Sciatic nerve (tissue), 2 donors: ENCODE measurements at regions of chr5 and their contacts with region 1.

Region 1: DNA sequence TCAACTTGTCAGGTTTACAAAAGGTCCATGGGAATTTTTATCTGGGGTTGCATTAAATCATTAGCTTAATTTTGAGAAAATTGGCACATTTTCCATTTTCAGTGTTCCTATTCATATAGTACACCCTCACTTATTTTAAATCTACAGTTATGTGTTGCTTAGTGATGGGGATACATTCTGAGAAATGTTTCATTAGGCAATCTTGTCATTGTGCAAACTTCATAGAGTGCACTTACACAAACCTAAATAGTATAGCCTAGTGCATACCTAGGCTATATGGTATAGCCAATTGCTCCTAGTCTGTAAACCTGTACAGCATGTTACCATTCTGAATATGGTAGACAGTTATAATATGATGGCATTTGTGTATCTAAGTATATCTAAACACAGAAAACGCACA is 19.8 kb upstream of the FAM151B start:
- DNase-seq: no peak
- ATAC-seq: no peak

Region 2: DNA sequence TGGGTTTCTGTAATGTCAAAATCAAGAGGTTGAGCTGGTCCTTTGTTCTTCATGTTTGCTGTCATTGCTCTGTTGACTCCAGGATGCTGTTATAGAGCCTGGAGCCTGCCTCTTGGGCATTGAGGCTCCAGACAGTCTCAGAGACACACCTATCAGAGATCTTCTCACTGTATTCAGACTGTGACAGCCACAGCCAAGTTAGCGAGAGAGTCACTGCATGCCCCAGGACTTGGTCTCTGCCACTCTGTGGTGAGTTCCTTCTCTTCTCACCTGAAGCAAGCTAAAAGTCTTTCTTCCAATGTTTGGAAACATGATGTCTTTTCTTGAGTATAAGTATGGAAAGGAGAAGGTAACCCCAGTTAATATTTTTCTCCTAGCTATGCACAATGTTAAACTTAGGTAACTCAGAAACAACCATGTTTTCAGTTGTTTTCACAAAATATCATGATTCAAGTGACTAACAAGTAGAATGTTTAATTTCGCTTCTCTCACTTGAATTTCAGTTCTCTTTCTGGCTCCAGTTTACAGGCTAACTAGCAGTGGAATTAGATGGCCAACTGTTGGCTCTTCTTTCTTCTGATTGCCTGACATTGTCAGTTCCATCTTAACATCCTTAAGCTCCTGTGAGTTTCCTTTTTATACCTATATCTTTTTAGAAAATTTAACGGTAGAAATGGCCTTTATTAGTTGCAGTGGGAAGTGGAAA is 80.9 kb before region 1 on chr5:
- intact Hi-C with region 1: no loop called
- DNase-seq: no peak
- ATAC-seq: no peak

Region 3: DNA sequence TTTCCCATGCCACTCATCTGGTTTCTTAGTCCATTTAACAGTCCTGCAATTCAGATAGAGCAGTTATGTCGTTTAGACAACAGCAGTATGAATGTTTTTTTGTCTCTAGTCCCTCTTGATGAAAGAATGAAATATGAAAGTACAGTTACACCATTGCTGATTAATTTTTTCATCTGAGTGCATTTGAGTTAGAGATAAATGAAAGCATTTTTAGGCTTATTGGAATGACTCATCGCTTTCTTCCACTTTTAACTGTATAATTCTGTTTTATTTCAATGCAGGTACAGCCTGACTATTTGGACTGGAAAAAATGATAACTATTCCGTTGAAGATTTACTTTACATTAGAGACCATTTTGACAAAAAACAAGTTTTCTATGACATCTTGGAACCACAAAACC is 73.3 kb after region 1 on chr5:
- intact Hi-C with region 1: loop called (anchors 2 kb)
- DNase-seq: no peak
- ATAC-seq: no peak